GM12878 (cell line): ENCODE measurements at regions of chr5 and their contacts with region 1.

Region 1: GRCh38 chr5:142922223-142922952 is 152.2 kb downstream of the ARHGAP26 start:
- DNase-seq: peak; percentile 21
- ATAC-seq: peak; percentile 92
- H3K4me3 ChIP-seq: no peak overlapping the region
- H3K27ac ChIP-seq: no peak overlapping the region
- H3K4me1 ChIP-seq: no peaks in the 10 kb centered on the region
- H3K27me3 ChIP-seq: no peaks in the 10 kb centered on the region
- CTCF ChIP-seq: peak; percentile 41 to 66 (median 48); a peak in 4 of 6 replicates
- EP300 ChIP-seq: no peak
- POLR2A ChIP-seq: no peak
- RAD21 ChIP-seq: peak; percentile 68

Region 2: DNA sequence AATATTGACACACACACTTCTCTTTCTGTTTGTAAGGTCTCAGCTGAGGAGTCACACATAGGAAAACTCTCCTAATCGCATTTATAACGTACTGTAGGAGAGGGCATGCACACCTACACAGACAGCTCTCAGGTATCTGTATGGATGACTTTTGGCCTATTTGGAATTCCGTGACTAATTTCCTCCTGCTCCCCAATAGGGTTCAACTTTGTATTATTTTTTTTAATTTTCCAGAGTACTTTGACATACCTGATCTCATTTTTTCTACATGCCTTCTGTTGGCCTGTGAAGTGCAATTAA is 43.7 kb after region 1 on chr5:
- CTCF ChIA-PET with region 1: interaction called, 37 read pairs
- POLR2A ChIA-PET with region 1: interaction called, 6 read pairs
- RAD21 ChIA-PET with region 1: interaction called, 5 read pairs
- SMC1A ChIA-PET with region 1: interaction called, 6 read pairs
- in situ Hi-C with region 1: no loop called
- intact Hi-C with region 1: loop called (anchors 2 kb)
- DNase-seq: no peak
- ATAC-seq: no peak
- H3K4me3 ChIP-seq: no peak overlapping the region
- H3K27ac ChIP-seq: no peak overlapping the region
- H3K4me1 ChIP-seq: no peaks in the 10 kb centered on the region
- H3K27me3 ChIP-seq: no peaks in the 10 kb centered on the region
- CTCF ChIP-seq: no peak
- EP300 ChIP-seq: no peak
- POLR2A ChIP-seq: no peak
- RAD21 ChIP-seq: no peak

Region 3: DNA sequence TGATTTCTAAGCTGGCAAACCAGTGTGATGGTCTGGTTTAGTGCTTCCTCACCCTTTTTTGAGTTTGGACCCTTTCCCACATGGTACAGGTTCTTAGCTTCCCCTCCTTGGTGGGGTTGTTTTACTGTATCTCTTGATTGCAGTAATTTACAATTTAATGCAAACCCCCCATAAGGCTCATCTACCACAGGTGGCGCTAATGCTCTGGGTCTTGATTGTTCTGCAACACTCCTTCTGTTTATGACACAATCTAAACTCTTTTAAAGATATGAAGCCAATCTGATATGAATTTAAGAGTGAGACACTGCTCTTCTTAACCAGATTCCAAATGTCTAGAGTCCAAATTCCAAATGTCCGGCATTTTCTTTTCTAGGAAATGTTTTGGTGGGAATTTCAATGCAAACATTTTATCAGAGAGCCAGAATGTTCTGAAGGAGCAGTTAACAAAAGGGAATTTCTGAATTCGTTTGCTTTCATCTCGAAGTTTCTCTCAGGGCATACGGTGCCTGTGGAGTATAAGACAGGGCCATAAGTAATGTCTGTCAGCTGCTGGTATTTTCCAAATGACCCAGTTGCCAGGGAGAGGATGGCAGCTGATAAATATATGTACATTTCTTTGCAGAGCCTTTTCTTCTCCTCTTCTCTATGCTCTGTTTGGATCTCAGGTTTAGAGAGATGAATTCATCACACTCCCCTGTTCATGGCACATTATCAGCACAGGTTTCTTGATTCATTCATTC is 94.6 kb after region 1 on chr5:
- CTCF ChIA-PET with region 1: interaction called, 10 read pairs
- POLR2A ChIA-PET with region 1: no interaction called
- RAD21 ChIA-PET with region 1: interaction called, 3 read pairs
- SMC1A ChIA-PET with region 1: interaction called, 5 read pairs
- in situ Hi-C with region 1: no loop called
- intact Hi-C with region 1: no loop called
- DNase-seq: no peak
- ATAC-seq: peak; percentile 28
- H3K4me3 ChIP-seq: no peak overlapping the region
- H3K27ac ChIP-seq: no peak overlapping the region
- H3K4me1 ChIP-seq: peaks cover 32% of the 10 kb centered on the region
- H3K27me3 ChIP-seq: no peaks in the 10 kb centered on the region
- CTCF ChIP-seq: peak; percentile 68 to 75 (median 72)
- EP300 ChIP-seq: peak in 1 of 2 experiments; percentile 8; a peak in 1 of 4 replicates
- POLR2A ChIP-seq: no peak
- RAD21 ChIP-seq: peak; percentile 88

Region 4: DNA sequence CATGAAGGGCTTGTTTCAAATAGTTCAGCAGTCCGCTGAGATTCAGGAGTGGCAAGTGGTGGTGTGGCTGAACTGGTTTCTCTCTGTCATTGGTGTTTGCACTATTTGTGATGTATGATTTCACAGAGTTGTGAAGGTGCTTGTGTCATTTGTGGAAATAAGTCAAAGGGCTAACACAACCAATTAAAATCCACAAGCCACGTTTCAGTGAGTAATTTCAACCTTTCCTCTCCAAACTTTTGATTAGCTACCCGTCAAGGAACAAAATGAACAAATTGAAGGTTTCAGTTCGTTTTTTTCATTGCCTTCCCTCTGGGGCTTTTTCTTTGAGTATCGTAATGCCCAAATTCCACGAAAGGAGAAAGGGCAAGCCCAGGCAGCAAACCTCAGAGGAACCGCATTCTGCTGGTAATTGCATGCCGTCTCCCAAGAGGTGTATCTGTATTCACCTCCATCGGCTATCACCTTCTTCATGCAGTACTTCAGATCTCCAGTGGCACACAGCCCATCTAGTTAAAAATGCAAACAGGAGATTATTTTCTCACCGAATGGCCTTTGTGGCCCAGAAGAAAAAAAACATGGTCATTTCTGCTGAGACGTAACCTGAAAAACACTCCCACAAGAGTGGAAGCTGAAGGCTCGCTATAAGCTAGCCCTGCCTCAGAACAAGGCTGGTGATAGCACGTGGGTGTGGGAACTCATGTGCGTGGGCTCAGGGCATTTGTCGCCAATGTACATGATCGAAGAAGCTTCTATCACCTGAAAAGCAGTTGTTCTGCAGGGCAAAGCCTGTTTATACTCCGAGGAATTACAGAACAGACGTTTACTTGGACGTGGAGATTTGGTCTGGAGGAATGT is 284.0 kb after region 1 on chr5:
- CTCF ChIA-PET with region 1: interaction called, 5 read pairs
- POLR2A ChIA-PET with region 1: no interaction called
- RAD21 ChIA-PET with region 1: no interaction called
- SMC1A ChIA-PET with region 1: interaction called, 3 read pairs
- in situ Hi-C with region 1: no loop called
- intact Hi-C with region 1: loop called (anchors 2 kb)
- DNase-seq: peak; percentile 98
- ATAC-seq: peak; percentile 71
- H3K4me3 ChIP-seq: peak overlapping the region; percentile 21; the same call in 1 of the 2 replicates
- H3K27ac ChIP-seq: peak overlapping the region; percentile 94
- H3K4me1 ChIP-seq: peaks cover 52% of the 10 kb centered on the region
- H3K27me3 ChIP-seq: no peaks in the 10 kb centered on the region
- CTCF ChIP-seq: peak in 1 of 3 experiments; percentile 13; a peak in 1 of 6 replicates
- EP300 ChIP-seq: peak; percentile 76 to 91; a peak in 2 of 4 replicates
- POLR2A ChIP-seq: peak; percentile 61; the same call in 1 of the 2 replicates
- RAD21 ChIP-seq: peak; percentile 40

Region 5: GRCh38 chr5:144142139-144142823 is 1219.9 kb after region 1 on chr5:
- CTCF ChIA-PET with region 1: interaction called, 11 read pairs
- POLR2A ChIA-PET with region 1: no interaction called
- RAD21 ChIA-PET with region 1: interaction called, 5 read pairs
- SMC1A ChIA-PET with region 1: interaction called, 3 read pairs
- in situ Hi-C with region 1: no loop called
- intact Hi-C with region 1: no loop called
- DNase-seq: peak; percentile 25
- ATAC-seq: peak; percentile 99
- H3K4me3 ChIP-seq: no peak overlapping the region
- H3K27ac ChIP-seq: no peak overlapping the region
- H3K4me1 ChIP-seq: peaks cover 11% of the 10 kb centered on the region
- H3K27me3 ChIP-seq: no peaks in the 10 kb centered on the region; a peak in 1 of 4 replicates
- CTCF ChIP-seq: peak; percentile 64 to 71 (median 69)
- EP300 ChIP-seq: no peak
- POLR2A ChIP-seq: no peak
- RAD21 ChIP-seq: peak; percentile 83